Activated B cell treated with CpG ODN at 0.5 μM for 24 hours (primary cell): ENCODE measurements at regions of chr2 and their contacts with region 1.

Region 1: DNA sequence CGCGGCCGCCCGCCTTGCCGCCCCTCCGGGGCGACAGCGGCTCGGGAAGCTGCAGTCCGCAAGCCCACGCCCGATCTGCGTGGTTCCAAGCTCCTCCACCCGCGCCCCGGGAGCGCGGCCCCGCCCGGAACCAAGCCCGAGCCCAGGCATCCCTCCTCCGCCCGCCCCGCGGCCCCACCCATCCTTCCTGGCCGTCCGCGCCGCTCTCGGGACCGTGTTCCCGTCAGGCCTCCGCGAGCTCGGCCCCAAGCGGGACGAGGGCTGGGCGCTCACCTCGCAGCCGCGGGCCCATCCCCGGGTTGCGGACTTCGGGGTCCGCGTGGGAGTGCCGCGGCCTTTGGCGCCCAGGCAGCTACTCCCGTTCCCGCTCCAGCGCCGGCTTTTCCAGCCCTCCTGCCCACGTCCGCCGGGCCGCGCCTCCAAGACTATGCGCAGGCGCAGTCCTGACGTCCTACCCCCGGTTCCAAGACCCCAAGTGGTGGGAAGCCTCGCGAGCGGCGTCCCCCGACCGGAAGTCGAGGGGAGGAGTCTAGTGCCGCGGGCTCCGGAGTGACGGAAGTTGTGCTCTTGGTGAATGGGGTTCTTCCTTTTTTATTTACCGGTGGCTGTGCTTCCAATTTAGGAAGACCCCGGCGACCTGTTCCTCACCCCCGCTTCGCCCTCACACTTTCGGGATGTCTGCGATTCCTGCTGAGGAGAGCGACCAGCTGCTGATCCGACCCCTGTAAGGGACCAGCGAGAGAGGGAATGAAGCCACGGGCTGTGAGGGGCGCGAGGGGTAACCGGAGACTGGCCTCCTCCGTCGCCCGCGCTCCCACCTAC is at the starts of genes CPSF3 and ITGB1BP1:
- DNase-seq: peak; percentile 96
- ATAC-seq: peak; percentile 86
- H3K4me3 Mint-ChIP-seq: no peak within 1 kb of the TSS
- H3K27ac Mint-ChIP-seq: peak within 1 kb of the TSS; percentile 91
- H3K4me1 Mint-ChIP-seq: peaks cover 22% of the 10 kb centered on the region
- H3K27me3 Mint-ChIP-seq: no peaks in the 10 kb centered on the region
- CTCF ChIP-seq: no peak
- total RNA-seq, gene CPSF3: 44.0 and 44.6 TPM in 2 replicates
- total RNA-seq, gene ITGB1BP1: 39.6 and 40.5 TPM in 2 replicates

Region 2: DNA sequence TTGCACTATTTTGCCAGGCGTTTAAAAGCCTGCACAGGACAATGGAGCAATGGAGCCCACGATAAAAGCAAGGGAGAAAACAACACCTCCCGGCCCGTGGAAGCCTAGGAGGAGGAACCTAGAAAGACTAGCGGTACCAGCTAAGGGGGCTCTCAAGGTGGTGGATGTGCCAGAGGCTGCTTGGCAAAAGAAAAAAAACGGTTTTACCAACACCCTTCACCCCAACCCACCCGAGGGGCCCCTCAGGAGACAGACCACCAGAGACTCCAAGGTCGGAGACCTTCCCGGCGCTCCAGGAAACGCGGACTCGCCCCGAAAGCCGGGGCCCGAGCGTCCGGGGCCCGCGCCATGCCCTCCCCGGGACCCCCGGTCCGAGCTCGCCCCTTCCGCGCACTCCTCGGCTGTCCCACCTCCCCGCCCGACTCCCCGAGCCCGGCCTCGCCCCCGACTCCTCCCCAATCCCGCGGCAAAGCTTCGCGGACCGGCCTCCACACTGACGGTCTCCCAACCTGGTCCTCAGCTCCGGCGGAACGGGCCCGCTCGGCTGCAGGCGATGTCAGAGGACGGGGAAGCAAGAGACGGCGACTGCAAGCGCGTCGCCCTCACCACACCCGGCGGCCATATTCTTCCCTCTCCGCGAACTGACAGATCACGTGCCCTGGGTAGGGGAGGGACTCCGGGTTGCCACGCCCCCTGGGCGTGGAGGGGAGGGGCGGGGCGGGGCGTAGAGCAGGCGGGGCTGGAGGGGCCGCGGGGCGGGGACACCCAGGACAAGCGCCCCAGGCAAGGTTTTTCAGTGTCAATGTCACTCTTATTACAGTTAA is 586.1 kb before region 1 on chr2 and contains the start of gene KIDINS220:
- CTCF ChIA-PET with region 1: no interaction called
- POLR2A ChIA-PET with region 1: no interaction called
- intact Hi-C with region 1: loop called (anchors 1 kb)
- DNase-seq: peak; percentile 74
- ATAC-seq: peak; percentile 96
- H3K4me3 Mint-ChIP-seq: peak within 1 kb of the TSS; percentile 98
- H3K27ac Mint-ChIP-seq: peak within 1 kb of the TSS; percentile 96
- H3K4me1 Mint-ChIP-seq: peaks cover 40% of the 10 kb centered on the region
- H3K27me3 Mint-ChIP-seq: peaks cover 6% of the 10 kb centered on the region
- CTCF ChIP-seq: no peak
- total RNA-seq, gene KIDINS220: 26.4 and 26.9 TPM in 2 replicates

Region 3: DNA sequence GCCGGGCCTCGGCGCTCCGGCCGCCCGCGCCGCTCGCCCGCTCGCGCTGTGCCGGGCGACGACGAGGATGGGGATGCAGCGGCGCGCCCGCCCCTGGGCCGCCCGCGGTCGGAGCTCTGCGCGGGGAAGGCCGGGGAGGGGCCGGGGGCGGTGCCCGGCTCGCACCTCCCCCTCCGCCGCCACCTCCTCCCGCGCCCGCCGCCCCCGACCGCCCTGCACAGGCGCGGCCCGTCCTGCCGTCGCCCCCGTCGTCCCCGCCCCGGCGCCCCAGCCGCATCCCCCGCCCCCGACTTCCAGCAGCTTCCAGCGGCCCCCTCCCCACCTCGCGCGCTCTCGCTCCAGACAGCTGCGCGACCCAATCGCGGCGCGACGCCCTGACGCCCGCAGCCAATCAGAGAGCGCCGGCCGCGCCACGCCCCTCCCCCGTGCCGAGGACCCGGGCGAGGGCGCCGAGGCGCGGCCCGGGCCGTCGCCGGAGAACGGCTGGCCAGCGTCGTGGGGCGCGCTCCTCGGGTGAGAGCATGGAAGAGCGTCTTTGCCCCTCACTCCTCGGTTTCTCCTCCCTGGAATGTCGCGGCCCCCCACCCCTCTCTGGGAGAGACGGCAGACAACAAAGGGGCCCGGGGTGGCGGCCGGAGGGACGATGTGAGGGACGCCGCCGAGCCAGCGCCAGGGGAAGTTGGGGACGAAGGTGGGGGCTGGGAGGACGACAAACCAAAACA is 419.5 kb before region 1 on chr2 and contains the start of gene MBOAT2:
- CTCF ChIA-PET with region 1: no interaction called
- POLR2A ChIA-PET with region 1: no interaction called
- intact Hi-C with region 1: loop called (anchors 5 kb)
- DNase-seq: peak; percentile 79
- ATAC-seq: peak; percentile 90
- H3K4me3 Mint-ChIP-seq: peak within 1 kb of the TSS; percentile 82
- H3K27ac Mint-ChIP-seq: peak within 1 kb of the TSS; percentile 37
- H3K4me1 Mint-ChIP-seq: peaks cover 11% of the 10 kb centered on the region
- H3K27me3 Mint-ChIP-seq: peaks cover 4% of the 10 kb centered on the region
- CTCF ChIP-seq: no peak
- total RNA-seq, gene MBOAT2: 0.69 and 1.7 TPM in 2 replicates

Region 4: DNA sequence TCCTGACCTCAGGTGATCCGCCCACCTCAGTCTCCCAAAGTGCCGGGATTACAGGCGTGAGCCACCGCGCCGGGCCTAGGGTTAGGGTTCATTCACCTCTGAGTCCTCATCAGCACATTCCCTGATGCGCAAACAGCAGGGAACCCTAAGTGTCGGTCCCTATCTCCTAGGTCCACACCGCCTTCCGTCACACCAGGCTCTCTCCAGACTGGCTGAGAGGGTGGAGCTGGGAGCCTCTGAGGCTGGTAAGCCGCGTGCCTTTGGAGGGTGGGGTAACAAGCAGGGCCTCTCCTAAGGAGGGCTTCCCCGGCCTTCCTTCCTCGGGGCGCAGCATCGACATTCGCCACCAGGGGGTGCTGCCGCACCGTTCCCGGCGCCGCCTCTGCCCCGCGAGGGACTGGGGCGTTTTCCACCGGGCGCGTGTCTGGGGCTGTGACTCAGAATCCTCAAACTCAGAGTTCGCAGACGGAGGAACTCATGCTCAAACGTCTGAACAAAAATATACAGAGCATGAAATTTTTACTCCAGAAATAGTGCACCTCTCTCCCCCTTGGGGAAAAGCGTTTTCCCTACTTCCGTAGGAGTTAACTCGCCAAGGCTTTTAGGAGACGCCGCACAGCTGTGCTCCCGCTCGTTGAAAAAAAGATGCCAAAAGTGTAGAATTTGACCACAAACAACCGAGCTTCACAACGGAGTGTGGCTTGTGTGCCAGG is 280.6 kb before region 1 on chr2:
- CTCF ChIA-PET with region 1: no interaction called
- POLR2A ChIA-PET with region 1: no interaction called
- intact Hi-C with region 1: loop called (anchors 1 kb)
- DNase-seq: peak; percentile 74
- ATAC-seq: peak; percentile 91
- H3K4me3 Mint-ChIP-seq: peak overlapping the region; percentile 11
- H3K27ac Mint-ChIP-seq: no peak overlapping the region
- H3K4me1 Mint-ChIP-seq: peaks cover 6% of the 10 kb centered on the region
- H3K27me3 Mint-ChIP-seq: peaks cover 16% of the 10 kb centered on the region
- CTCF ChIP-seq: no peak

Region 5: GRCh38 chr2:9326975-9327374 is 96.3 kb before region 1 on chr2:
- CTCF ChIA-PET with region 1: no interaction called
- POLR2A ChIA-PET with region 1: no interaction called
- intact Hi-C with region 1: no loop called
- DNase-seq: no peak
- ATAC-seq: no peak
- H3K4me3 Mint-ChIP-seq: no peak overlapping the region
- H3K27ac Mint-ChIP-seq: no peak overlapping the region
- H3K4me1 Mint-ChIP-seq: peaks cover 13% of the 10 kb centered on the region
- H3K27me3 Mint-ChIP-seq: peaks cover 8% of the 10 kb centered on the region
- CTCF ChIP-seq: no peak

Region 6: DNA sequence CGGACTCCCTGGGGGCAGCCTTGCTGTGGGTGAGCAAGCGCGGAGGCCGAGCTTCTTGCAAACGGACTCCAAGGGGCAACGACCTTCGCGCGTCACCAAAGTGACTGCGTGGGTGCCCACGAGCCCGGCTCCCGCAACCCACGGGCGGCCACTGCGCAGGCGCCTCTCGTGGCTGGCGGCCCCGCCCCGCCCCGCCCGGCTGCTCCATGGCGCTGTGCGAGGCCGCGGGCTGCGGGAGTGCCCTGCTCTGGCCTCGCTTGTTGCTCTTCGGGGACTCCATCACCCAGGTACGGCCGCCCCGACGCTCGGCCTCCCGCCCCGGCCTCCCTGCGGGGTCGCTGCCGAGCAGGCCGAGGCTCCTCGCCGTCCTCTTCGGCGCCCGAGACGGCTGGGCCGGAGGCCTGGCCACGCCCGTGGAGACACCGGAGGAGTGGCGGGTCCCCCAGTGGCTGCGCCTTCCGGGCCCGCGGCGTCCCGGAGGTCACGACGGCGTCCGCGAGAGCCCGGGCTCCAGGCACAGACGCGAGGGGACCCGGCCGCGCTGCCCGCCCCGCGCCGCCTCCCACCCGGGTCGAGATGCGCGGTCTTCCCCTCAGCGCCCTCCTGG is 51.2 kb after region 1 on chr2 and contains the start of gene IAH1:
- CTCF ChIA-PET with region 1: no interaction called
- POLR2A ChIA-PET with region 1: no interaction called
- intact Hi-C with region 1: loop called (anchors 1 kb)
- DNase-seq: peak; percentile 69
- ATAC-seq: peak; percentile 82
- H3K4me3 Mint-ChIP-seq: peak within 1 kb of the TSS; percentile 80
- H3K27ac Mint-ChIP-seq: peak within 1 kb of the TSS; percentile 61
- H3K4me1 Mint-ChIP-seq: peaks cover 39% of the 10 kb centered on the region
- H3K27me3 Mint-ChIP-seq: no peaks in the 10 kb centered on the region
- CTCF ChIP-seq: no peak
- total RNA-seq, gene IAH1: 47.1 and 49.0 TPM in 2 replicates